IMR-90 (cell line): ENCODE measurements at regions of chr6 and their contacts with region 1.

Region 1: DNA sequence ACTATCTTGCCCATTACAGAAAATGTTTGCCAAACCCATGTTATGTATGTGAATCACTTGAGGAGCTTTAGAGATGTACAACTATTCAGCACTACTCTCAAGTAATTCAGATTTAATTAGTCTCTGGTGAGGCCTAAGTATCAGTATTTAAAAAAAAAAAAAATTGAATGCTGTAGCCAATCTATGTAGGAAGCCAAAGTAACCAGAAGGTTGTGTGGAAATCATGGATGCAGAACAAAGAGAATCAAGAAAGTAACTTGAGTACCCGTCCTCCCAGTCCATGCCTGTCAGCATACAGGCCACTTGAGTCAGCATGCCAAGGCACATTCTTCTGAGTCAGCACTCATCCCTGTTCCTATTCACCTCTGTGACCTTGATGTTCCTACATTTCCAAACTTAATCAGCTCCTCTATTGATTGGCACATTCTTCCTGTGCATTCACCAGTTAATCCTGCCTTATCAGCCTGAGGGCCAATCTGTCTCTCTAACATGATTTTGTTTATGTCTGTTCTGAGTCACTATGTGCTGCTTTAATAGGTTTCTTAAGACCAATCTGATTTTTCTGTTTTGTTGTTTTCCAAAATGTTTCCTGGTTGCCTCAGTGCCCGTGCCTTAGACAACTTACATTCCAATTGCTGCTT is 165.6 kb downstream of the KCNQ5 start:
- DNase-seq: peak; percentile 78
- ATAC-seq: peak; percentile 67
- H3K4me3 ChIP-seq: no peak overlapping the region
- H3K27ac ChIP-seq: no peak overlapping the region
- H3K4me1 ChIP-seq: peaks cover 11% of the 10 kb centered on the region
- H3K27me3 ChIP-seq: no peaks in the 10 kb centered on the region
- CTCF ChIP-seq: no peak
- POLR2A ChIP-seq: no peak
- RAD21 ChIP-seq: no peak

Region 2: DNA sequence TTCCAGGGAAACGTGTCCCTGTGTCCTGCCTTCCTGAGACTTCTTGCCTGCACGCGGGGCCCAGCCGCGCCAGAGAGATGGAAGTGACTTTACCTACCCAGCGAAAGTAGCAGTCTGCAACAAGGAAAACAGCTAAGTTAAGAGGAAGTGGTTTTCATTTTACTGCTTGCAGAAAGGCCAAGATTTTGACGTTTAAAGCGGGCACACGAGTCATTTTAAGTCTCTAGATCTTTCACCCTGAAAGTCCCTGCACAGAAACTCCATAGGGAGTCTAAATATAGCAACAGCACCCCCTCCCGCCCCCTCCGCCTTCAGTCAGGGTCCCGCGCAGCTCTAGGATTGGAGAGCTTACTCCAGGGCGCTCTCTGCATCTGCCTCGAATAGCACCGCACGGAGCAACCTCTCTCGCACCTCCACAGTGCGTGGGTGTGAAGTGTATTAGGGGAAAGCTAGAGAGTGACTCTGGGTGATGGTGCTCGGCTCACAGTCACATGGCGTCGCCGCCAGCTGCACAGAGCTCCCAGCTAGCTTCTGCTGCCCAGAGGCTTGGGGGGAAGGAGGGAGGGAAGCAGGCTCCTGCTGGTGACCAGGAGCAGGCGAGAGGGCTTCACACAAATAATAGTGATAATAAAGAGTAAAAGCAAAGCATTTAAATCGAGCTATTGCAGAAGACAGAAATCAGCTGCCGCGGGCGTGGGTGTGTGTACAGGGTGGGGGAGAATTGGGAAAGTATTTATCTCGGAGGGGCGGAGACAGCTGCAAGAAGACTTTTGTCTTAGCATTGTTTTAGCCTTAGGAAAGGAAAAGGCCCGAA is 167.4 kb before region 1 on chr6:
- CTCF ChIA-PET with region 1: no interaction called
- POLR2A ChIA-PET with region 1: no interaction called
- dilution Hi-C with region 1: no loop called
- in situ Hi-C with region 1: no loop called
- intact Hi-C with region 1: loop called (anchors 1 kb)
- DNase-seq: peak; percentile 45
- ATAC-seq: peak; percentile 9
- H3K4me3 ChIP-seq: peak overlapping the region; percentile 27
- H3K27ac ChIP-seq: no peak overlapping the region
- H3K4me1 ChIP-seq: 0 out of 2 replicates have a peak, but pooled peaks cover 2% of the 10 kb centered on the region
- H3K27me3 ChIP-seq: no peaks in the 10 kb centered on the region
- CTCF ChIP-seq: no peak
- POLR2A ChIP-seq: no peak
- RAD21 ChIP-seq: no peak

Region 3: GRCh38 chr6:72755752-72756151 is 31.8 kb before region 1 on chr6:
- CTCF ChIA-PET with region 1: no interaction called
- POLR2A ChIA-PET with region 1: no interaction called
- dilution Hi-C with region 1: no loop called
- in situ Hi-C with region 1: no loop called
- intact Hi-C with region 1: no loop called
- DNase-seq: no peak
- ATAC-seq: no peak
- H3K4me3 ChIP-seq: no peak overlapping the region
- H3K27ac ChIP-seq: no peak overlapping the region
- H3K4me1 ChIP-seq: no peaks in the 10 kb centered on the region
- H3K27me3 ChIP-seq: no peaks in the 10 kb centered on the region
- CTCF ChIP-seq: no peak
- POLR2A ChIP-seq: no peak
- RAD21 ChIP-seq: no peak